Activated CD4-positive, alpha-beta memory T cell treated with anti-CD3 and anti-CD28 coated beads for 36 hours (primary cell): ENCODE measurements at regions of chr11 and their contacts with region 1.

Region 1: GRCh38 chr11:61187505-61188130 is 15.7 kb upstream of the PGA3 start:
- DNase-seq: peak; percentile 85
- H3K4me3 Mint-ChIP-seq: peak overlapping the region; percentile 33
- H3K27ac Mint-ChIP-seq: no peak overlapping the region
- H3K4me1 Mint-ChIP-seq: peaks cover 2% of the 10 kb centered on the region
- H3K27me3 Mint-ChIP-seq: peaks cover 3% of the 10 kb centered on the region

Region 2: GRCh38 chr11:60775420-60775961 is 412.1 kb before region 1 on chr11:
- CTCF ChIA-PET with region 1: interaction called, 14 read pairs
- POLR2A ChIA-PET with region 1: no interaction called
- intact Hi-C with region 1: no loop called
- DNase-seq: peak; percentile 89
- H3K4me3 Mint-ChIP-seq: no peak overlapping the region
- H3K27ac Mint-ChIP-seq: no peak overlapping the region
- H3K4me1 Mint-ChIP-seq: peaks cover 10% of the 10 kb centered on the region
- H3K27me3 Mint-ChIP-seq: peaks cover 4% of the 10 kb centered on the region

Region 3: GRCh38 chr11:60913793-60914632 is 273.6 kb before region 1 on chr11 and contains the start of gene TMEM109:
- CTCF ChIA-PET with region 1: interaction called, 11 read pairs
- POLR2A ChIA-PET with region 1: no interaction called
- intact Hi-C with region 1: loop called (anchors 1 kb)
- DNase-seq: peak; percentile 92
- H3K4me3 Mint-ChIP-seq: peak within 1 kb of the TSS; percentile 92
- H3K27ac Mint-ChIP-seq: peak within 1 kb of the TSS; percentile 91
- H3K4me1 Mint-ChIP-seq: peaks cover 56% of the 10 kb centered on the region
- H3K27me3 Mint-ChIP-seq: no peaks in the 10 kb centered on the region
- total RNA-seq, gene TMEM109: 101 to 106 TPM

Region 4: DNA sequence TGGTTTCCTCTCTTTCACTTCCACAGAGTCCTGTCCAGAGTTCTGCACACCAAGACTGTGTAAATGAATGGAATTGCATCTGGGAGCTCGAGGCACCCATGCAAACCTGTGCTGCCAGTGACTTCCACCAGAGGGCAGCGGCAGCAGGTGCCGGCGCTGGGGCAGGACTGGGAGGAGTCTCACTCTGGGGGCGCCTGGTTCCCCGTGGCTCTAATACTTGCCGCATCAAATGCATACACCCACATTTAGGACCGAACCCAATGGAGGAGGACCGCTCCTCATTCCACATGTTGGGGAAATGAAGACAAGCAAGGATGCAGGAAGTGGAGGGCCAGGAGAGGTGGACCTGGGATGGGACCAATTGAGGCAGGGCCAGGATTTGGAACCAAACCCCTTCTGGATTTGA is 217.2 kb before region 1 on chr11:
- CTCF ChIA-PET with region 1: interaction called, 49 read pairs
- POLR2A ChIA-PET with region 1: no interaction called
- intact Hi-C with region 1: loop called (anchors 1 kb)
- DNase-seq: peak; percentile 89
- H3K4me3 Mint-ChIP-seq: peak overlapping the region; percentile 95
- H3K27ac Mint-ChIP-seq: peak overlapping the region; percentile 99
- H3K4me1 Mint-ChIP-seq: peaks cover 15% of the 10 kb centered on the region
- H3K27me3 Mint-ChIP-seq: no peaks in the 10 kb centered on the region

Region 5: GRCh38 chr11:61129639-61130523 is 57.7 kb before region 1 on chr11:
- CTCF ChIA-PET with region 1: interaction called, 33 read pairs
- POLR2A ChIA-PET with region 1: no interaction called
- intact Hi-C with region 1: loop called (anchors 1 kb)
- DNase-seq: peak; percentile 95
- H3K4me3 Mint-ChIP-seq: peak overlapping the region; percentile 17
- H3K27ac Mint-ChIP-seq: peak overlapping the region; percentile 57
- H3K4me1 Mint-ChIP-seq: peaks cover 25% of the 10 kb centered on the region
- H3K27me3 Mint-ChIP-seq: no peaks in the 10 kb centered on the region

Region 6: GRCh38 chr11:61141601-61142028 is 46.0 kb before region 1 on chr11:
- CTCF ChIA-PET with region 1: interaction called, 10 read pairs
- POLR2A ChIA-PET with region 1: no interaction called
- intact Hi-C with region 1: no loop called
- DNase-seq: no peak
- H3K4me3 Mint-ChIP-seq: no peak overlapping the region
- H3K27ac Mint-ChIP-seq: no peak overlapping the region
- H3K4me1 Mint-ChIP-seq: peaks cover 4% of the 10 kb centered on the region
- H3K27me3 Mint-ChIP-seq: no peaks in the 10 kb centered on the region

Region 7: GRCh38 chr11:61176446-61176845 is 11.2 kb before region 1 on chr11:
- CTCF ChIA-PET with region 1: interaction called, 11 read pairs
- POLR2A ChIA-PET with region 1: no interaction called
- intact Hi-C with region 1: no loop called
- DNase-seq: no peak
- H3K4me3 Mint-ChIP-seq: no peak overlapping the region
- H3K27ac Mint-ChIP-seq: no peak overlapping the region
- H3K4me1 Mint-ChIP-seq: peaks cover 11% of the 10 kb centered on the region
- H3K27me3 Mint-ChIP-seq: peaks cover 2% of the 10 kb centered on the region